ENCODE measurements at regions of chr13 and their contacts with region 1.

Region 1: DNA sequence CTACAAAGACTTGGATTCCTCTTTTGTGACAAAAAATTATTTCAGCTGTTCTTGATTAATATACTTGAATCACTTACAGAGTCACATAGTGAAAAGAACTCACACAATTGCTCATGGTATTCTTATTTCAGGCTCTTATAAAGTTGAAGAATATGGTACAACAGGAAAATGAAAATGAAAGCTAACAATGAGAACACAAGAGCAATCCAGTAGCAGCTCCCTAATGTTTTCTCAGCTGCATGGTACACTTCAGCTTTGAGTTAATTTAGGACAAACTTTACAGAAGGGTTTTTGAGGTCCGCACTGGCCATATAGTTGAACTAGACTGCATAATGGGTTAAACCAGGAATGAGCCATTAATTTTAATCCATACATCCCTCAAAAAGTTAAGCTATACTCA is 1261.8 kb downstream of the SLITRK5 start:
- DNase-seq: no peak
- H3K4me3 ChIP-seq: no peak overlapping the region
- CTCF ChIP-seq: no peak
- POLR2A ChIP-seq: no peak

Region 2: GRCh38 chr13:89457977-89458376 is 525.0 kb after region 1 on chr13:
- intact Hi-C with region 1: loop called (anchors 5 kb)
- DNase-seq: no peak
- H3K4me3 ChIP-seq: no peak overlapping the region
- CTCF ChIP-seq: no peak
- POLR2A ChIP-seq: no peak

Region 3: GRCh38 chr13:90084684-90085290 is 1151.8 kb after region 1 on chr13:
- intact Hi-C with region 1: no loop called
- DNase-seq: no peak
- H3K4me3 ChIP-seq: no peak overlapping the region
- CTCF ChIP-seq: no peak
- POLR2A ChIP-seq: no peak

Measured in lower leg skin (tissue), 4 donors.